ENCODE measurements at regions of chr1 and their contacts with region 1.

Region 1: DNA sequence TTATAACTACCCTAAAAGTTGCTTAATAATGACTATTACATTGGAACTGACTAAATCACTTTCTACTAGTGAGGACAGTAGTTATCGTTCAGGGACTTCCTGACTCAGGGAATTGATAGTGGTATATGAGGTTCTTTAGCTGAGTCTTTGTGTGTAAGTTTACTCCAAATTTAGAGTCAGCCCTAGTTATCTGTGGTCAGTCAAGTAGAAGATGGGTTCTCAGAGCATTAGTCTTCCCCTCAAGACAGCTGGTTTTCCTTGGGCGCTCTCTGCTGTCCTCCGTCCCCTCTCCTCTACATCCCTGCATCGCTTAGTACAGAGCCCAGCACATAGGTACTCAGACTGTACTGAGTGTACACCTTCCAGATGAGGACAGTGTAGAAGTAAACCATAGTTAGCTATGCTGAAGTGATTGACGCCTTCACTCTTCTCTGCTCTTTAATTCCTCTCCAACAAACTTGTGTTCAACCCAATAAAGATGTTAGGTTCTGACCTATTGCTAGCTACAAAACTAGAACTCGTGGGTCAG is 116.5 kb downstream of the C1orf21 start:
- DNase-seq: no peak
- H3K4me3 ChIP-seq: no peak overlapping the region
- H3K27ac ChIP-seq: no peak overlapping the region
- H3K27me3 ChIP-seq: no peaks in the 10 kb centered on the region
- CTCF ChIP-seq: no peak

Region 2: GRCh38 chr1:184075055-184076029 is 427.9 kb before region 1 on chr1:
- CTCF ChIA-PET with region 1: no interaction called
- POLR2A ChIA-PET with region 1: interaction called, 10 read pairs
- DNase-seq: no peak
- H3K4me3 ChIP-seq: no peak overlapping the region
- H3K27ac ChIP-seq: no peak overlapping the region
- H3K27me3 ChIP-seq: no peaks in the 10 kb centered on the region
- CTCF ChIP-seq: peak; percentile 80

Region 3: DNA sequence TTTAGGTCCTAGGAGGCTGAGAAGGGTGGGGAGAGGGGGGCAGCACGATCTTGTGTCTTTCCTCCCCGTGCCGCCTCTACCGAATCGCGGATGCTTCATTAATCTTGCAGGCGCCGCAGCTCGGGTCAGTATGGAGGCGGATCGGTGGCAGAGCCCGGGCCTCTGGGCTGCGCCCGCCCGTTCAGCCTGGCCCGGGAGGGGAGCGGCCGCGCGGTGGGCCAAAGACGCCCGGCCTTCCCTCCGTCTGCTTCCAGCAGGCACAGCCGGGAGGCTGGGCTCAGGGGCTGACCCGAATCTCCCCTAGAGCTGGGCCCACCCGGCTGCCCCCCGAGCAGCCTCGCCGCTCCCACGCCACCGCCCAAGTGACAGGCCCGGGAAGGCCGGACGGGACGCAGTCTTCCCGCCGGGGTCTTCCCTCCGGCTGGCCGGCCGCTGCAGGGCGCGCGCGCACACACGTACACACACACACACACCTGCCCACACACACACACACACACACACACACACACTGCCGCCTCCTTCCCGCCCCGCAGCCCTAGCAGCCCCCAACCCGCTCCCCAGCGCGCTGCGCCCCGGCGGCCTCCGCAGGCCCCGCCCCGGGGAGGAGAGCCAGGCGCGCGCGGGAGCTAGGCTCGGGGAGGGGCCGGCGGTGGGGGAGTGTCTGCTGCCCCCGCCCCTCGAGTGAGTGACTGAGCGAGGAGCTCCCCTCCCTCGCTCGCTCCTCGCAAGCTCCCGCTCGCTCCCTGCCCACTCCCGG is 116.8 kb before region 1 on chr1 and contains the start of gene C1orf21:
- CTCF ChIA-PET with region 1: no interaction called
- POLR2A ChIA-PET with region 1: no interaction called
- DNase-seq: peak; percentile 72
- H3K4me3 ChIP-seq: peak within 1 kb of the TSS; percentile 75
- H3K27ac ChIP-seq: peak within 1 kb of the TSS; percentile 39
- H3K27me3 ChIP-seq: no peaks in the 10 kb centered on the region
- CTCF ChIP-seq: no peak
- polyA plus RNA-seq, gene C1orf21: 21.0 and 29.5 TPM in 2 replicates

Region 4: DNA sequence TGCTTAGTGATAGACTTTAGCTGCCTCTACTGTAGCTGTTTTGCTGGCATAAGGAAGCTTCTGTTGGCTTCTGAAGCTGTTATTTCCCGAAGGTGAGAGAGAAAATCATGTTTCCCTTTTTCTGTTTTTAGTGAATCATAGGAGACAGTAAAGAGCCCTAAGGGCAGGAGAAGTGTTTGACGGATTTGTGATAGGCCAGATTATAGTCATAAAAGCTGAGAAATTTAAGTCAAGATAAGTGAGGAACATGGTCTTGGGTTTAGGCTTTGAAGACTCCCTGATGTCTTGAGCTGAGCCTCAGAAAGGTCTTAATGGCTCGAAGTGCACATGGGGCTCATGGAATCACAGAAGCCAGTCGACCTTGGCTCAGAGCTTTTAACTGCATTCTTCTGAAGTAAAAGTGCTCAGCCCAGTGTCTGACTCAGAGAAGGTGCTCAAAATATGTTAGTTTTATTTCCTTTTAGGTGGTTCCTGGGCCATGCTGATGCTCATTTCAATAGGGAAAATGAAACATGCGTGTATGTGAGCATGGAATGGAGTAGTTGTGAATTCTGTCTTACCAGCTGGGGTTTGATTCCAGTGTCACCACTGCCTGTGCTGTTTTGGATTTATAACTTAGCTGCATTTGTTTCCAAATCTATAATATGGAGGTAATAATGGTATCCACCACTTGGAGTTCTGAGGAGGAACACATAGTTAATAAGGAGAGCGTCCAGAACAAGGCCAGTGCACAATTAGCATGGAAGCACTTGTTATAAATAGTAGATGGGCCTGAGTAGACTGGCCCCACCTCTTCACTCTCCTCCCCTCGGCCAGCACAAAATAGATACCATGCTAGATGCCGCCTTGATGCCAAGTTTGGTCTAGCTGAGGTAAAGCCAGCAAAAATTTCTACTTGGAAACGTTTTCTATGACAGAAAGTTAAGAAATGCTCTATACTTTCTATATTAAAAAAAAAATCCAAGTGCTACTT is 17.2 kb before region 1 on chr1:
- CTCF ChIA-PET with region 1: no interaction called
- POLR2A ChIA-PET with region 1: no interaction called
- DNase-seq: no peak
- H3K4me3 ChIP-seq: no peak overlapping the region
- H3K27ac ChIP-seq: no peak overlapping the region
- H3K27me3 ChIP-seq: no peaks in the 10 kb centered on the region
- CTCF ChIP-seq: no peak

Region 5: GRCh38 chr1:184716158-184716557 is 212.9 kb after region 1 on chr1:
- CTCF ChIA-PET with region 1: no interaction called
- POLR2A ChIA-PET with region 1: no interaction called
- DNase-seq: no peak
- H3K4me3 ChIP-seq: no peak overlapping the region
- H3K27ac ChIP-seq: no peak overlapping the region
- H3K27me3 ChIP-seq: no peaks in the 10 kb centered on the region
- CTCF ChIP-seq: no peak